Posterior vena cava (tissue), 2 donors: ENCODE measurements at regions of chr15 and their contacts with region 1.

Region 1: DNA sequence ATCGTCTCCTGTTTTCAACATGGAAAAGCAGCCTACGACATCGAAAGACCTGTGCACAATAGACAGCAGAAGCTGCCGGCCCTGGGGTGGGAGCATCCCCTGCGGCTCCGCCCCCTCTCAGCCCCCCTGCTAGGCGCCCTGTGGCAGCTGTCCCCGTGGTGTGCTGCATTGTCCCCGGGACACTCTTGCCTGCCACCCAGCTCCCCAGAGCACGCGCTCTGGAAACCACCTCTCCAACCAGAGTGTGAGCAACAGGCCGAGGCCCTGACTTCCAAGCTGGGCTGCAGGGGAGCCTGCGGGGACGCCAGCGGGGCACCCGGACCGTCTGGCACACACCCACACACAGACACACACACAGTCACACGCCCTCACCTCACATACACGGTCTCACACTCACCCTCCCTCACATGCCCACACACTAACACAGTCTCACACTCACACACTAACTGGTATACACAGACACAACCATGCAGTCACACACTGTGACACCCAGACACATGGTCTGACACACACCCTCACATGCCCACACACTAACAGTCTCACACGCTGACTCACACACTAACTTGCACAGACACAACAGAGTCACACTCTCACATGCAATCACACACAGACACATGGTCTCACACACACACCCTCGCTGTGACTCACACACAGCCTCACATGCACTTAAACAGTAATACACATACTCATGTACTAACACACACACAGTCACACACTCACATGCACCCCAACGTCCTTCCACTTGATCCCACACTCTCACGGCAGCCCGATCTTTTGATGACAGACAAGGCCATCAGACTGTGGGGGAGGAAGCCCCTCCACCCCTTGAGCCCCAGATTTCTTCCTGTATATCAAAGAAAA is 94.7 kb downstream of the OCA2 start:
- DNase-seq: peak; percentile 65

Region 2: DNA sequence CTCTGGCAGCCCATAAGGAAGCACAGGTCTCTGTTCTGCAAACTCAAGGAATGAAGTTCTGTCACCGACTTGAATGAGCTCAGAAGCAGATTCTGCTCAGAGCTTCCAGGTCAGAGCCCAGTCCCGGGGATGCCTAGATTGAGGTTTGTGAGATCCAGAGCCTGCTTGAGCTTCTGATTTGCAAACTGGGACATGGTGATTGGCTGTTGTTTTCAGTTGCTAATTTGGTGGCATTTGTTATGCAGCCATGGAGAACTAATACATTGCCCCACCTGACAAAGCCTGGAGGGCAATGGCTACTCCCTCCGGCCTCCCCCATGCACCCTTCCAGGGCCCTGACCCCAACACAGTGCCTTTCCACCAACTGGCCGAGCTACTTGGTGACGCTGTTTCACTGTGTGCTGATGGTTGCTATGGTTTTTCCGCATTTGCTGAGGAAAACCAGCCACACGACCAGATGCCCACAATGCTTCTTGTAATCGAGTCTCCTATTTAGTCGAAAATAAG is 1761.8 kb before region 1 on chr15:
- intact Hi-C with region 1: loop called in 1 of 2 experiments (anchors 5 kb)
- DNase-seq: no peak

Region 3: GRCh38 chr15:28098766-28099554 is 94.6 kb after region 1 on chr15 and contains the start of gene OCA2:
- intact Hi-C with region 1: no loop called
- DNase-seq: peak; percentile 85
- total RNA-seq, gene OCA2: 0.38 to 1.4 TPM